Activated B cell treated with CpG ODN at 0.5 μM for 24 hours (primary cell): ENCODE measurements at regions of chr1 and their contacts with region 1.

Region 1: GRCh38 chr1:160997323-160998038 is 23.5 kb downstream of the F11R start:
- DNase-seq: peak; percentile 29
- ATAC-seq: peak; percentile 81
- H3K4me3 Mint-ChIP-seq: no peak overlapping the region
- H3K27ac Mint-ChIP-seq: peak overlapping the region; percentile 42
- H3K4me1 Mint-ChIP-seq: peaks cover 3% of the 10 kb centered on the region
- H3K27me3 Mint-ChIP-seq: no peaks in the 10 kb centered on the region
- CTCF ChIP-seq: no peak

Region 2: DNA sequence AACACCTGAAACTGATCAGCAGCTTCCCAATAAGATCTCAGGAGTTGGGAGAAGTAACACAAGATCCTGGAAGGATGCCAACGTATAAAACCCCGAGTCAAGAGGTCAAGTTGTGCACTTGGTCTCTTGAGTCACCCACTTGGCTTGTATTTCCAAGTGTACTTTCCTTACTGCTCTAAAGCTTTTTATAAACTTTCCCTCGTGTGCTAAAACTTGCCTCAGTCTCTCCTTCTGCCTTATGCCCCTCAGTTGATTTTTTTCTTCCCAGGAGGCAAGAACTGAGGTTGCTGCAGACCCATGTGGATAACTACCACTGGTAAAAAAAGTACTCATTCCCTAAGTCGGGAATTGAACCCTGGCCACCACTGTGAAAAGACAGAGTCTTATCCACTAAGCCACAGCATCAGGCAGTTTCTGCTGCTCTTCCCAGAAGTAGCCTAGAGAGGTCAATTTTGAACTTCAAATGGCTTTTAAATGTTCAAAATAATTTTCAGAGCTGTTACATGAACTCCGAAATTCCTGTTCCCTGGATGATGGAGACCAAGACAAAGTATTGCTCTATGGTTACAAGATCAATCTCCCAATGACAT is 71.7 kb before region 1 on chr1:
- CTCF ChIA-PET with region 1: no interaction called
- POLR2A ChIA-PET with region 1: no interaction called
- intact Hi-C with region 1: no loop called
- DNase-seq: no peak
- ATAC-seq: no peak
- H3K4me3 Mint-ChIP-seq: no peak overlapping the region
- H3K27ac Mint-ChIP-seq: no peak overlapping the region
- H3K4me1 Mint-ChIP-seq: no peaks in the 10 kb centered on the region
- H3K27me3 Mint-ChIP-seq: peaks cover 5% of the 10 kb centered on the region
- CTCF ChIP-seq: no peak

Region 3: GRCh38 chr1:161013488-161014230 is 16.2 kb after region 1 on chr1:
- CTCF ChIA-PET with region 1: interaction called, 21 read pairs
- POLR2A ChIA-PET with region 1: interaction called, 11 read pairs
- intact Hi-C with region 1: loop called (anchors 1 kb)
- DNase-seq: peak; percentile 55
- ATAC-seq: peak; percentile 84
- H3K4me3 Mint-ChIP-seq: peak overlapping the region; percentile 87
- H3K27ac Mint-ChIP-seq: peak overlapping the region; percentile 98
- H3K4me1 Mint-ChIP-seq: peaks cover 23% of the 10 kb centered on the region
- H3K27me3 Mint-ChIP-seq: no peaks in the 10 kb centered on the region
- CTCF ChIP-seq: no peak

Region 4: GRCh38 chr1:161038523-161039153 is 41.2 kb after region 1 on chr1 and contains the start of gene TSTD1:
- CTCF ChIA-PET with region 1: interaction called, 13 read pairs
- POLR2A ChIA-PET with region 1: interaction called, 8 read pairs
- intact Hi-C with region 1: loop called (anchors 1 kb)
- DNase-seq: peak; percentile 80
- ATAC-seq: peak; percentile 84
- H3K4me3 Mint-ChIP-seq: peak within 1 kb of the TSS; percentile 91
- H3K27ac Mint-ChIP-seq: peak within 1 kb of the TSS; percentile 95
- H3K4me1 Mint-ChIP-seq: peaks cover 53% of the 10 kb centered on the region
- H3K27me3 Mint-ChIP-seq: no peaks in the 10 kb centered on the region
- CTCF ChIP-seq: no peak
- total RNA-seq, gene TSTD1: 69.8 and 70.2 TPM in 2 replicates

Region 5: DNA sequence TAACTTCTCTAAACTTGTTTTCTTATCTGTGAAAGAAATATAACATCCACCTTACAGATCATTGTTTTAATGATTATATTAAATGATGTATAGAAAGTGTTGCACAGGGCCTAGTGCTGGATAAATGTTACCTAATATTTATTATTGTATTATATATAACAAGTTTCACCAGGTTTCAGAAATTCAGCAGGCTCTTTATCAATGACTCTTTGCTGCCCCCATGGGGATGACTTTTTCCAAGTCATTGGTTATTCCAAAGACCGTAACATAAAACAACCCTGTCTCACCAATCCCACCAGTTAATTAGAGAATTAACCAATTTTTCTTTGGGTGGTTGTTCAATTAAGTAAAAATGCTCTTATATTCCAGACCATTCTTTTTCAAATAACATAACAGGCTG is 142.3 kb after region 1 on chr1:
- CTCF ChIA-PET with region 1: interaction called, 37 read pairs
- POLR2A ChIA-PET with region 1: no interaction called
- intact Hi-C with region 1: loop called (anchors 1 kb)
- DNase-seq: no peak
- ATAC-seq: peak; percentile 50
- H3K4me3 Mint-ChIP-seq: no peak overlapping the region
- H3K27ac Mint-ChIP-seq: no peak overlapping the region
- H3K4me1 Mint-ChIP-seq: peaks cover 4% of the 10 kb centered on the region
- H3K27me3 Mint-ChIP-seq: no peaks in the 10 kb centered on the region
- CTCF ChIP-seq: no peak